ENCODE measurements at regions of chr11 and their contacts with region 1.

Region 1: GRCh38 chr11:73288873-73289707 is 17.0 kb downstream of the P2RY6 start:
- DNase-seq: peak; percentile 94

Region 2: DNA sequence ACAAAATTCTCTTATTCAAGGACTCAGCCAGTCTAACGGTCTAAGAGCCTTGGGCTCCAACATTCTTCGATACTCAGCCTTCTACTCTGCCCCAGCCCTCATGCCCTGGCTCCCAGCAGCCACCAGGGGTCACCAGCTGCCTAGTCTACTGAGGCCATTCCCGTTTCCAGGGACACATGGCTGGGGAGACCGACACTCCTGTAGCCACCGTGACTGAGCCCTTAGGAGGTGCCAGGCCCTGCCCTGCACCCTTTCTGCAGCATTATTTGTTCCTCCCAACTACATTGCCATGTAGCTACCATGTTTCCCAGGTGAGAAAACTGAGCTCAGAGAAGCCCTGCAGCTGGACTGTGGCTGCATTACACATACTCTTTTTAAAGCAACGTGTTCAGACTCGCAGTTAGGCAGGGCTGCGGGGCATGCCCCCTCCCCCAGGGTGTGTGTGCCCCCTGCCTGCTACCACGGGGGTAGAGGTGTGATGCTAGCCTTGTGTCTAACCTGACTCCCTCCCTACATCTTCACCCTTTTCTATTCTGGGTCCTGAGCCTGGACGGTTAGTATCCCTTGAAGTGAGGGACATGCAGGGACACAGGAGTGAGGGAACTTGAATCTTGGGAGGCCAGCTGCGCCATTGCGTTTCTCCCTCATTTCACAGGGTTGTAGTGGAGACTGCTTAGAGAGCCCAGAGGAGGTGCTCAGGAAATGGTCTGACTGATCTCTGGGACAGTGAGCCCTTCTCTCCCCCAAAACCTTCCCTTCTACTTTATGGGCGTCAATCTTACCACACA is 457.4 kb before region 1 on chr11:
- intact Hi-C with region 1: loop called in 1 of 2 experiments (anchors 10 kb)
- DNase-seq: peak; percentile 94

Region 3: GRCh38 chr11:73242251-73243079 is 46.6 kb before region 1 on chr11:
- intact Hi-C with region 1: loop called (anchors 2 to 5 kb)
- DNase-seq: peak; percentile 88

Measured in posterior vena cava (tissue), 2 donors.